Cardiac septum (tissue), 1 donor: ENCODE measurements at regions of chr6 and their contacts with region 1.

Region 1: DNA sequence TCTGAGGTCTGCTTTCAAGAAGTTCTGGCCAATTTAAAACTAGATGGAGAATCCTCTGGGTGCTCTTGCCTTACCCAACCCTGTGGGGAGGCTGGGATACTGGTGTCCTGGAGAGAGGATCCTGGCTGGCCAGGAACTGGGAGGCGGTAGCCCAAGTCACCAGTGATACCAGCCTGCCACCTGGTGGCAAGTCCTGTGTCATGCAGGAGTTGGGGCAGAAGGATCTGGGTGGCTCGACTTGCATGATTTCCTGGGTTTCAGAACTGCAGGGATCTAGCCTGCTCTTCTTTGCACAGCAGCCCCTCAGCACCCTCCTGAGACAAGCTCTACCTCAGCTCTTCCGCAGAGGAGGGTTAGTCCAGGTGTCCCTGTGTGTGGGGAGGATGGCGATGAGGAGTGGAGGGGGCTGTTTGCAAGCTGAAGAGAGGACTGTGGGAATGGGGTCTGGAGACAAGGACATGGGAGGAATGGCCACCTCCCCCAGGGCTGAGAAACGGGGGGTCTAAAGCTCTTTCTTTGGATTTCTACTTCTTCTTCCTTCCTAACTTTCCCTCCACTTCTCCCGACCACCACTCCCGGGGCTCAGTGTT is 4.2 kb downstream of the KCNK17 start:
- DNase-seq: peak; percentile 84

Region 2: DNA sequence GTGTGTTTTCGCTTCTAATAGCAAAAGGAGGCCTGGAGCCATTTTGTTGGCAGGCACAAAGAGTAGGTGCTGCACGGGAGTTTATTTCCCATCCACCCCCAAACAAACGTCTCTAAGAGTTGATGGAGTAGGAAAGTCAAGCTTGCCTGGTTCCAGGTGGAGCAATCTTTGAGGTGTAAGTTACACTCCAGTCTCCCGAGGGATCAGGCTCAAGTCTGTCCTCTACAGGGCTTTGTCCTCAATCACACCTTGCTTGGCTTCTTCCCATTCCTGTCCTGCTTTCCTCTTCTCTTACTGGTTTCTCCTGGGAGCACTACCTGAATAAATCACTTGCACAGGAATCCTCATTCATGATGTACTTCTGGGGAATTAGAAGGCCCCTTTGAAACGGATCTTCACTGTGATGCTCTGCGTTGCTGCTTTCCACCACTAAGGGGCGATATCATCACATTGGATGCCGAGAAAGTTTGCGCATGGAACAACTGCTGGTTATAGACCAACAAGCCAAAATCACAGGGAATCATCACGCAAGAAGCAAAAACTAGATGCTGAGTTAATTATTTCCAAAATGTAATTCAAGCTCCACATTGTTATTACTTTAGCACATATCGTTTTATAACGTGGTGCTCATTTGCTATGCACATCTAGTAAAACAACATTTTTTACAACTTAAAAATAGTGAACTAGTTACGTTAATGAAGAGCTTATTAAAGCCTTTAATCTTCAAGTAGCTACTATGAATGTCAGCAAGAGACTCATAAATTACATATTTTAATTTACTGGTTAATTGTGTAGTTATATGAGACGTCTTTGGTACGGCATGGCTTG is 438.1 kb before region 1 on chr6:
- intact Hi-C with region 1: loop called (anchors 5 kb)
- DNase-seq: no peak

Region 3: DNA sequence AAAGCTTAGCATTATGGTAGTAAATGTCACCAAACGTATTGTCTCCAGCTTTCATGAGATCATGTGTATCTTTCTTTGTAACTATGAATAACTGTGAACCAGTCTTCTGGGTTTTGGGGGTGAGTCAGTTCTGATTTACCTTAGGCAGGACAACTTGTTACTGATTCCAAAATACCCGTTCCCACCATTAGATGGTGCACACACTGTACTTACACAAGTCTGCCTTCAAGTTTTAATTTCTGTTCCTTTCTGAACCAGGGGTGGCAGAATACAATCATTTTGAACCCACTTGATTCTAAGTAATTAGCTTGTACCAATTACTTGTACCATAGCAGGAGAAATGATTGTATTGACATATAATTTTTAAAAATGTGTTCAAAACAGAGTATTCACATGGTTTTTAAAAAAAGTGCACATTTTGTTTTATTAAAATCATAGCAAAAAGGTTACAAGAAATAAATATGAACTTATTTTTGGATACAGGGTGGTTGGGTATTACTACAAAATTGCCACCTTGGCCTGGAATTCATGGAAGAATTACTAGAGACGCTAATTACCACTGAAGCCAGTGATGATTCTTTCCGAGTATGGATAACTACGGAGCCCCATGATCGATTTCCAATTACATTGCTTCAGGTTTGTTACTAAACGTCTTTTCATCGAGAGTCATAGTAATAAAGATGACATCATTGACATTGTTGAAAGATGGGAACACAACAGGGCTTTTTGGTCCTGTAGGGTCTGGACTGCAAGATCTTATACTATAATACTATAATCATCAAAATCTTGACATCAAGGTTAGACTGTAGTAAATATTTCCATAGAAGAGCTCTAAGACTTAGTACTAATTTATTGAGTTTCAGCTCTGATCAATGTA is 336.6 kb before region 1 on chr6:
- intact Hi-C with region 1: loop called (anchors 5 kb)
- DNase-seq: no peak